IMR-90 (cell line): ENCODE measurements at regions of chr6 and their contacts with region 1.

Region 1: DNA sequence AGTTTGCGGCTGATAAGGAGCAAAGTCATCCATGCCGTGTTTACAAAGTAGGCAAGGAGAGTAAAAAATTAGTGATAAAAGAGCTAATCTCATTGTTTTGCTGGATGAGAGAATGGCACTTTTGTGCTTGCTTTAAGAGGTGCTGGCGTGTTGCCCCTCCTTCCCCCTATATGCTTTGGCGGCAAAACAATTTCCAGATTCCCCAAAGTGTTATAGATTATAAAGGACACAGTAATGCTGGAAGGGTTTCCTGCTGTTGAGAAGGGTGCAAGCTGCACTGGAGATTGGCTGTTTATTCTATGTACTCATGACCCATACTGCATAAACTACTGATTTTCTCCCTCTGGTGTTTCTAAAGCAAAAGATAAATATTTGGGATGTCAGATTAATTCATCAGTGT is 338.9 kb upstream of the MAP3K7 start:
- DNase-seq: no peak
- ATAC-seq: no peak
- H3K4me3 ChIP-seq: no peak overlapping the region
- H3K27ac ChIP-seq: no peak overlapping the region
- H3K4me1 ChIP-seq: no peaks in the 10 kb centered on the region
- H3K27me3 ChIP-seq: no peaks in the 10 kb centered on the region
- CTCF ChIP-seq: no peak
- POLR2A ChIP-seq: no peak
- RAD21 ChIP-seq: no peak

Region 2: GRCh38 chr6:90955246-90955645 is 29.5 kb after region 1 on chr6:
- CTCF ChIA-PET with region 1: no interaction called
- POLR2A ChIA-PET with region 1: no interaction called
- dilution Hi-C with region 1: no loop called
- in situ Hi-C with region 1: no loop called
- intact Hi-C with region 1: loop called (anchors 2 kb)
- DNase-seq: no peak
- ATAC-seq: no peak
- H3K4me3 ChIP-seq: no peak overlapping the region
- H3K27ac ChIP-seq: no peak overlapping the region
- H3K4me1 ChIP-seq: no peaks in the 10 kb centered on the region
- H3K27me3 ChIP-seq: no peaks in the 10 kb centered on the region
- CTCF ChIP-seq: no peak
- POLR2A ChIP-seq: no peak
- RAD21 ChIP-seq: no peak